Transverse colon (tissue), 4 donors: ENCODE measurements at regions of chr13 and their contacts with region 1.

Region 1: GRCh38 chr13:61600360-61601033 is 184.8 kb upstream of the PCDH20 start:
- DNase-seq: no peak
- H3K4me3 ChIP-seq: no peak overlapping the region
- H3K27ac ChIP-seq: no peak overlapping the region
- H3K4me1 ChIP-seq: no peaks in the 10 kb centered on the region
- H3K27me3 ChIP-seq: no peaks in the 10 kb centered on the region
- CTCF ChIP-seq: no peak
- EP300 ChIP-seq: no peak
- POLR2A ChIP-seq: no peak

Region 2: DNA sequence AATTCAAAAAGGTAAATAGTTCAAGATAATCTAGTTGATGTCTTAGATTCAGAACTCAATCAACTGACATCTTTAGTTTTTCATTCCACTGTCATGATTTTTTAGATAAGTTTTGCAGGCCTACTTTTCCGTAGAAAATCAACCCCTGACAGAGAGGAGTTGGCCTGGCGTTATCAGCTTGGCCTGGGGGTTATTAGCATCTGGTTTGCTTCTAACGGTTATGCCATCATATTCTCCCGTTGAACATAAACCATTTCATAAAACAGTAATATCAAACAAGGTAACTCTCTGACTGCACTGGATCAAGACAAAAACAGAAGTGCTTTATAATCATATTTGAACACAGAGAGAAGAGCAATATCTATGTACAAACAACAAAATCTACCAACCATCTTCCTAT is 54.1 kb before region 1 on chr13:
- in situ Hi-C with region 1: no loop called
- intact Hi-C with region 1: loop called (anchors 2 kb)
- DNase-seq: no peak
- H3K4me3 ChIP-seq: no peak overlapping the region
- H3K27ac ChIP-seq: no peak overlapping the region
- H3K4me1 ChIP-seq: no peaks in the 10 kb centered on the region
- H3K27me3 ChIP-seq: no peaks in the 10 kb centered on the region
- CTCF ChIP-seq: no peak
- EP300 ChIP-seq: no peak
- POLR2A ChIP-seq: no peak

Region 3: GRCh38 chr13:62193919-62194318 is 593.4 kb after region 1 on chr13:
- in situ Hi-C with region 1: no loop called
- intact Hi-C with region 1: no loop called
- DNase-seq: no peak
- H3K4me3 ChIP-seq: no peak overlapping the region
- H3K27ac ChIP-seq: no peak overlapping the region
- H3K4me1 ChIP-seq: no peaks in the 10 kb centered on the region
- H3K27me3 ChIP-seq: no peaks in the 10 kb centered on the region
- CTCF ChIP-seq: no peak
- EP300 ChIP-seq: no peak
- POLR2A ChIP-seq: no peak